ENCODE measurements at regions of chr18 and their contacts with region 1.

Region 1: GRCh38 chr18:67359873-67360838 is 156.4 kb downstream of the DSEL start:
- DNase-seq: peak; percentile 92
- H3K4me3 ChIP-seq: peak overlapping the region; percentile 18 to 28 (median 25)
- H3K27ac ChIP-seq: peak overlapping the region; percentile 61
- H3K4me1 ChIP-seq: peaks cover 12% of the 10 kb centered on the region
- H3K27me3 ChIP-seq: no peaks in the 10 kb centered on the region
- CTCF ChIP-seq: no peak

Region 2: DNA sequence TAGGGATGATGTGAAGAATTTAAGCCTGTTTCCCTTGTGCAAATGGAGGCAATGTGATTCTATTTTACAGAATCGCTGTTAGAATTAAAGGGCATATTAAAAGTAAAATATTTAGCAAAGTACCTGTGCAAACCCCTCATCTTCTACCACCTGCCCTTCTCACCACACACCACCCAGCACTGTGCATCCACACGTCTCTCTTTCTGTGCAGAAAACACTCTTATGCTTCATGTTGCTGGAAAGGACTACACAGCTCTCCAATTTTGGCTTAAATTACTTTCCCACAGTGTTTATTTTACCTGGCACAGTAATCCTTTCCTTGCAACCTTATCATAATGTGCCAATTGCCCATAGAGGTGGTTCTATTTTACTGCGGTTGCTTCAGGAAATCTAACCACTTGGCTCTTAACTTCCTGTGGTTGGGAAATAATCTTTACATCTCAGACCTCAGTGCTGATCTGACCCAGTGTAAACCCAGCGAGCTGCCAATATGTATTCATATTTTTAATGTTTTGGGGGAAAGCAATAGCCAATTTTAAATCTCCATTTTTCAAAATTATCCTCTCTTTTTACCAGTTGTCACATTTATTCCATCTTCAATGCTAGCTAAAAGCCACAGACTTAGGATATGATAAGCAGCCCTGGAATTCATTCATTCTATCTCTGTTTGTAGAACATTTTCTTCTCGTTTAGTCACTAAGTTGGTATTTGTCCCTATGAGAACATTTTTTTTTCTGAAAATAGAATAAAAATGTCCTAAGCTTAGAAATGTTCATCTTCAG is 94.5 kb before region 1 on chr18:
- CTCF ChIA-PET with region 1: no interaction called
- dilution Hi-C with region 1: no loop called
- in situ Hi-C with region 1: no loop called
- intact Hi-C with region 1: loop called (anchors 10 kb)
- DNase-seq: peak; percentile 82
- H3K4me3 ChIP-seq: peak overlapping the region in 2 of 3 experiments; percentile 9 to 26
- H3K27ac ChIP-seq: peak overlapping the region; percentile 98
- H3K4me1 ChIP-seq: peaks cover 38% of the 10 kb centered on the region
- H3K27me3 ChIP-seq: no peaks in the 10 kb centered on the region
- CTCF ChIP-seq: no peak